WTC11 (cell line): ENCODE measurements at regions of chr18 and their contacts with region 1.

Region 1: DNA sequence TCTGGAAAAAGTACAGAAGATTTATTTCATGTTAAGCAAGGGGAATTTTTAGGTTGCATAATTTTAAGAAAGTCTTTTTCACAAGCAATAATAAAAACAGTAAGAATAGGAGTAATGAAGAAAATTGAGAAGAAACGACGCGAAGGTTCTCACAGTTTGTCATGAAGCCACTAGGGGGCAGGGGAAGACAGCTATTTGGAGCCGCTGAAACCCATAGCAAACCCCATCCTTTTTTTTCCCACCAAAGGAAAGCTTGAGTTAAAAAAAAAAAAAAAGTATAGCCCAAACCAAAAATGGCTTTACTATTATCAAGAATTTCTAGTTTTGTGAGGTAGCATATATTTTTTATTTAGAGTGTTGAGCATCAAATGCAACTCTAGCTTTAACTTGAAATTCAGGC is 300.9 kb downstream of the PHLPP1 start:
- DNase-seq: peak; percentile 41
- ATAC-seq: peak; percentile 73
- H3K4me3 Mint-ChIP-seq: no peak overlapping the region
- H3K27ac Mint-ChIP-seq: no peak overlapping the region
- H3K4me1 Mint-ChIP-seq: peaks cover 4% of the 10 kb centered on the region
- H3K27me3 Mint-ChIP-seq: no peaks in the 10 kb centered on the region; the same call in 1 of the 2 replicates
- CTCF ChIP-seq: peak; percentile 76

Region 2: DNA sequence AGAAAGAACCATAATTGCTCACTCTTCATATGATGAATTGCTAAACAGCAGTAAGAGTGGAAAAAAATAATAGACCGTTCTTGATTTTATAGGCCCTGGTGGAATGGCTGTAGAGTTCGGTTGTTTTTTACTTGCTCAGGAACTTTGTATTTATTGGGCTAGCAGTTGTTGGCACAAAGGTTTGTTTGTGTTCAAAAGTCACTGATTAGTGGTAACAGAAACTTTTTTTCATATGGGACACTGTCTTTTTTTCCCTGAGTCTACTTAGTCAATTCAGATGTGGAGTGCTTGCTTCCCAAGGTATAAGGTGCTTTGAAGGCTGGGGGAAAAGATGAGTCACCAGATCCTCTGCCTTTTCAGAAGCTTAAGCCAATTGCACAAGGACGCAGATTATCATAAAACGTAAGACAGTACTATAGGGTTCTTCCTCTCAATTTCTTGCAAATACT is 275.1 kb before region 1 on chr18:
- CTCF ChIA-PET with region 1: no interaction called
- POLR2A ChIA-PET with region 1: no interaction called
- DNase-seq: no peak
- ATAC-seq: no peak; the same call in 1 of the 2 replicates
- H3K4me3 Mint-ChIP-seq: no peak overlapping the region
- H3K27ac Mint-ChIP-seq: peak overlapping the region; percentile 97
- H3K4me1 Mint-ChIP-seq: peaks cover 88% of the 10 kb centered on the region
- H3K27me3 Mint-ChIP-seq: no peaks in the 10 kb centered on the region
- CTCF ChIP-seq: no peak

Region 3: GRCh38 chr18:63325086-63325686 is 308.9 kb after region 1 on chr18:
- CTCF ChIA-PET with region 1: interaction called, 21 read pairs
- POLR2A ChIA-PET with region 1: no interaction called
- DNase-seq: no peak
- ATAC-seq: no peak
- H3K4me3 Mint-ChIP-seq: no peak overlapping the region
- H3K27ac Mint-ChIP-seq: no peak overlapping the region; the same call in 1 of the 2 replicates
- H3K4me1 Mint-ChIP-seq: peaks cover 12% of the 10 kb centered on the region
- H3K27me3 Mint-ChIP-seq: peaks cover 7% of the 10 kb centered on the region; the same call in 1 of the 2 replicates
- CTCF ChIP-seq: no peak